ENCODE measurements at regions of chr19 and their contacts with region 1.

Region 1: DNA sequence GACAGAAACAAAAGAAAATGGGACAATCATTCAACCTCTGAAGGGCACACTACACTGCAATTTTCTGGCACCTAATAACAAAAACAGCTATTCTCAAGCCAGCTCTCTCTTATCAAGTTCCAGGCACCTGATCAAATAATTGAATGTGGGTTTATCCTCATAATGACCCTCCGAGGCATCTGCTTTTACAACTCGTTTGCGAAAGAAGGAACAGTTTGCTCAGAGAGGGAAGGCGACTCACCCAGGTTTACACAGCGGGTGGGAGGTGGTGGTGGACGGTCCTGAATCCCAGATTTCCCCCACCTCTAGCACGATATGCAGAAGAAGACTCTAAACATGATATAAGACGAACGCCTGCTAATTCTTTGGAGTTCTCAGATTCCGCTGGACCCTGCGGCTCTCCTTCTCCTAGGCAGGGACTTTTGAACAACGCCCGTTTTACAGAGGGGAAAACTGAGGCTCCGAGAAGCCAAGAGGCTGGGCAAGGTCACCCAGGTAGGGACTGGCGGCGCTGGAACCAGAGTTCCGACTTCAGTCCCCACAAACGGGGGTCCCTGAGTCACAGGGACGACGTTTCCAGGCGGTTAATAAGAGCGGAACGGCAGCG is 641 bp downstream of the SGTA start:
- DNase-seq: no peak
- H3K4me3 Mint-ChIP-seq: peak overlapping the region; percentile 88
- H3K27ac Mint-ChIP-seq: peak overlapping the region; percentile 92
- H3K4me1 Mint-ChIP-seq: peaks cover 61% of the 10 kb centered on the region
- H3K27me3 Mint-ChIP-seq: no peaks in the 10 kb centered on the region

Region 2: GRCh38 chr19:2750808-2751443 is 31.5 kb before region 1 on chr19:
- CTCF ChIA-PET with region 1: interaction called, 13 read pairs
- DNase-seq: no peak
- H3K4me3 Mint-ChIP-seq: no peak overlapping the region
- H3K27ac Mint-ChIP-seq: no peak overlapping the region
- H3K4me1 Mint-ChIP-seq: no peaks in the 10 kb centered on the region
- H3K27me3 Mint-ChIP-seq: peaks cover 5% of the 10 kb centered on the region

Region 3: DNA sequence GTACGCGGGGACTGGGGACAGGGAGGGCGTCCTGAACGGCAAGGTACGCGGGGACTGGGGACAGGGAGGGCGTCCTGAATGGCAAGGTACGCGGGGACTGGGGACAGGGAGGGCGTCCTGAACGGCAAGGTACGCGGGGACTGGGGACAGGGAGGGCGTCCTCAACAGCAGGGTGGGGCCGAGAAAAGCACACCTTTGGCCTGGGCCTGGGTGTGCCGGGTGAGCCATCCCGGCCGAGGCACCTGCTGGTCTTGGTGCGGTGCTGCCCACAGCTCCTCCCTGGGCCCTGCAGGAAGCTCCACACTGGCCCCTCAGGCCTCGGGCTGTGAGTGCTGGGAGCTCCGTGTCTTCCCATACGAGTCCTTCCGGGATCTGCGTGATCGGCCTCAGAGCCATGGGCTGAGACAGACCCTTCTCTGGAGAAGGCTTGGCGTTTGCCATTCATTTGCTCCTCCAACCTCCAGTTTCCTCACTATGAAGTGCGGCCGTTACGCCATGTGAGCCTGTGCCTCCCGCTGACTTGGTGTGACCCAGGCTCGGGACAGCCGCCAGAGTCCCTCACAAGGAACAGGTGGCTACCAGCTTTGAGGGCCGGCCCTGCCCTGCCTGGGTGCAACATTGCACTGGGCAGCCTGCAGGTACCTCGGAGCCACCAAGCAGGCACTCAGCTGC is 29.4 kb after region 1 on chr19:
- CTCF ChIA-PET with region 1: no interaction called
- DNase-seq: no peak
- H3K4me3 Mint-ChIP-seq: no peak overlapping the region
- H3K27ac Mint-ChIP-seq: no peak overlapping the region
- H3K4me1 Mint-ChIP-seq: no peaks in the 10 kb centered on the region
- H3K27me3 Mint-ChIP-seq: no peaks in the 10 kb centered on the region

Measured in activated naive CD4-positive, alpha-beta T cell treated with anti-CD3 and anti-CD28 coated beads, Interleukin-2, amount 10 ng/mL, durations not matched to agents 7 days and 5 days (primary cell).